AG04449 (cell line): ENCODE measurements at regions of chr2 and their contacts with region 1.

Region 1: DNA sequence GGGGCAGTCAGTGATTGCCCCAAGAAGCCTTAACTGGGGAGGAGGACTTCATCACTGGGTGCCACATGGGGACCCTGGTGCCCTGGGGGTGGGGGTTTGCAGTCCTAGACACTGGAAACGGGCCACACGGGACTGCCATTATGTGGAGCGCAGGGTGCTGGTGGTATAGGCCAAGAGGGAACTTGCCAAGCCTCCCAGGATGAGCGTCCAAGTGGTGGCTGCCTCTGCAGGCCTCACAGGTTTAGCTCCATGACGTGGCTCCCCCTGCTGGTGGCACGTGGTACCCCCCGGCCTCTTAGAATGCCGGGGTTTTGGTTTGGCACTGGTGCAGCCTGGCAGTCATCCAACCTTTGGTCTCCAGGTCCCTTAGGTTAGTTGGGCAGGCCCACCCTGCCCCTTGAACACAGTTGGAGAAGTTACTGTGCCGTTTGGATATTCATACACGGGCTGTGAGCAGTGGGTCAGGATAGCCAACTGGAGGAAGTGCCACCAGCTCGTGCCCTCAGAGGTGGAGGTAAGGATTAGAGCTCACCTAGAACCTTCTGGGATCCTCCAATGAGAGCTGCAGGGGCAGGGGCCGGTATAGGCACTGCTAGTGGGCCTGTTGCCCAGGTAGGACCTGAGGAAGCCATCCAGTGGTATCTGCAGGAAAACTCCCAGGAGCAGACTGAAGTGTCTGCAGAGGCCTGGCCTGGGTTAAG is 5.6 kb downstream of the PTMA start:
- DNase-seq: no peak
- H3K4me3 ChIP-seq: no peak overlapping the region
- CTCF ChIP-seq: peak; percentile 98

Region 2: GRCh38 chr2:231604685-231605606 is 108.9 kb before region 1 on chr2:
- CTCF ChIA-PET with region 1: interaction called, 237 read pairs
- POLR2A ChIA-PET with region 1: interaction called, 4 read pairs
- DNase-seq: peak; percentile 65
- H3K4me3 ChIP-seq: peak overlapping the region; percentile 56
- CTCF ChIP-seq: no peak

Region 3: GRCh38 chr2:231632559-231633142 is 81.2 kb before region 1 on chr2:
- CTCF ChIA-PET with region 1: interaction called, 47 read pairs
- POLR2A ChIA-PET with region 1: interaction called, 3 read pairs
- DNase-seq: peak; percentile 83
- H3K4me3 ChIP-seq: no peak overlapping the region
- CTCF ChIP-seq: no peak

Region 4: GRCh38 chr2:231674587-231675338 is 39.1 kb before region 1 on chr2:
- CTCF ChIA-PET with region 1: interaction called, 743 read pairs
- POLR2A ChIA-PET with region 1: interaction called, 10 read pairs
- DNase-seq: no peak
- H3K4me3 ChIP-seq: no peak overlapping the region
- CTCF ChIP-seq: peak; percentile 92

Region 5: GRCh38 chr2:231769170-231770136 is 55.6 kb after region 1 on chr2:
- CTCF ChIA-PET with region 1: interaction called, 11 read pairs
- POLR2A ChIA-PET with region 1: no interaction called
- DNase-seq: no peak
- H3K4me3 ChIP-seq: no peak overlapping the region
- CTCF ChIP-seq: no peak

Region 6: DNA sequence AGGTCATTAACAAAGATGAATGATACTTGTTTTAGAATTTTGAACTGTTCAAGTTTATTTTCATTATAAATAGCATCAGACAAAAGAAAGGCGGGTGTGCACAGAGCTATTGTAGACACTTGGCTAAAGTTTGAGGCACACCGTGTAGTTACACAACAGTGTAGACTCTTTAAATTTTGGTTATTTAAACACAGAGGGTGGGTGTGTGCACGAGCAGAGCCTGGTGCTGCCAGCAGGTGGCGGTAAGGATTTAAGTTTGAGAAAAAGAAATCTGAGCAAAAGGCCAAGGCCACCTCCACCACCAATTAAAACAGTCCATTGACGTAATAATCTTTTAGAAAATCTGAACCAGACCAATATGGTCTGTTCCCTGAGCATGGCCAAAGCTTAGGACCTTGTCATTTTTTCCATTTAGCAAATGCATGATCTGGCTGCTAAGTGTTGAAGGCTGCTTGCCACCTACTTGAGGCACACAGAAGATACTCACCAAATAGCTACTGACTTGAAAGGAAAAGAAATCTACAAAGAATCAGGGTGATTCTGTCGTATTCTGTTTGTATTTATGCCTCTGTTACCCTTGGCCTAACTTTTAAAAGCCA is 86.7 kb after region 1 on chr2:
- CTCF ChIA-PET with region 1: interaction called, 12 read pairs
- POLR2A ChIA-PET with region 1: no interaction called
- DNase-seq: no peak
- H3K4me3 ChIP-seq: no peak overlapping the region
- CTCF ChIP-seq: peak; percentile 55